Activated CD8-positive, alpha-beta T cell treated with anti-CD3 and anti-CD28 coated beads, Interleukin-2, amount 10 ng/mL, durations not matched to agents 7 days and 5 days (primary cell): ENCODE measurements at regions of chr12 and their contacts with region 1.

Region 1: DNA sequence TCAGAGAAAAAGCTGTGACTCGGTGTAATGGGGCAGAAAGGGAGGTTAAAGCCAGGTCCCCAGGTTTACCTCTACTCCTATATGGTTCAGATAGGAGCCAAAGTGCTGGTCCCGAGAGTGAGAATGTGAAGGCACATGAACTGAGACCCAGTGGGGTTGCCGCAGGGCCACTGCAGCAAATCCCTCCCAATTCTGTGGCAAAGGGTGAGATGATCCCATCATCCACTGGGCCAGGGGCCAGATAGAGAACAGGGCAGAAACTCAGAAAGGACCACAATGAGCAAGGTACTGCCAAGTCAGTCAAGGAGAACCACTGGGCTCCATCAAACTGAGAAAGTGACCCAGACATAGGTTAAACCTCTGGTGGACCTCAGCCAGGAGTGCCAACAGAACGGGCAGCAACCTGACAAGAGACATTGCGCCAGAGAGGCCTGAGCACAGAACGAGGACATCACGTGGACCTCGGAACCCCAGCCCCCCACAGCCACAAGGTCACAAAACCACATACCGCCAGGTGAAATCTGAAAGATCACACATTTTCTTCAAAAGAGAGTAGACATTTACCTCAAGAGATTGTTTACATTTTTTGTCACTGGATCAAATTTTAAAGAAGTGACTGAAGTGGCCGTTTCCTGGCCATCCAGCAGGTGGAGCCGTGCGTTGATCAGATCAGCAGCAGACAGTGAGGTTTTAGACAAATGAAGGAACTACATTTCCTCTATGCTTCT is 20.5 kb upstream of the ITPR2 start:
- DNase-seq: peak; percentile 83
- ATAC-seq: peak; percentile 96
- H3K4me3 Mint-ChIP-seq: no peak overlapping the region
- H3K27ac Mint-ChIP-seq: no peak overlapping the region
- H3K4me1 Mint-ChIP-seq: no peaks in the 10 kb centered on the region
- H3K27me3 Mint-ChIP-seq: peaks cover 9% of the 10 kb centered on the region

Region 2: GRCh38 chr12:26863502-26863901 is 10.0 kb after region 1 on chr12:
- CTCF ChIA-PET with region 1: interaction called, 15 read pairs
- POLR2A ChIA-PET with region 1: no interaction called
- DNase-seq: no peak
- ATAC-seq: no peak
- H3K4me3 Mint-ChIP-seq: no peak overlapping the region
- H3K27ac Mint-ChIP-seq: no peak overlapping the region
- H3K4me1 Mint-ChIP-seq: peaks cover 12% of the 10 kb centered on the region
- H3K27me3 Mint-ChIP-seq: peaks cover 3% of the 10 kb centered on the region

Region 3: DNA sequence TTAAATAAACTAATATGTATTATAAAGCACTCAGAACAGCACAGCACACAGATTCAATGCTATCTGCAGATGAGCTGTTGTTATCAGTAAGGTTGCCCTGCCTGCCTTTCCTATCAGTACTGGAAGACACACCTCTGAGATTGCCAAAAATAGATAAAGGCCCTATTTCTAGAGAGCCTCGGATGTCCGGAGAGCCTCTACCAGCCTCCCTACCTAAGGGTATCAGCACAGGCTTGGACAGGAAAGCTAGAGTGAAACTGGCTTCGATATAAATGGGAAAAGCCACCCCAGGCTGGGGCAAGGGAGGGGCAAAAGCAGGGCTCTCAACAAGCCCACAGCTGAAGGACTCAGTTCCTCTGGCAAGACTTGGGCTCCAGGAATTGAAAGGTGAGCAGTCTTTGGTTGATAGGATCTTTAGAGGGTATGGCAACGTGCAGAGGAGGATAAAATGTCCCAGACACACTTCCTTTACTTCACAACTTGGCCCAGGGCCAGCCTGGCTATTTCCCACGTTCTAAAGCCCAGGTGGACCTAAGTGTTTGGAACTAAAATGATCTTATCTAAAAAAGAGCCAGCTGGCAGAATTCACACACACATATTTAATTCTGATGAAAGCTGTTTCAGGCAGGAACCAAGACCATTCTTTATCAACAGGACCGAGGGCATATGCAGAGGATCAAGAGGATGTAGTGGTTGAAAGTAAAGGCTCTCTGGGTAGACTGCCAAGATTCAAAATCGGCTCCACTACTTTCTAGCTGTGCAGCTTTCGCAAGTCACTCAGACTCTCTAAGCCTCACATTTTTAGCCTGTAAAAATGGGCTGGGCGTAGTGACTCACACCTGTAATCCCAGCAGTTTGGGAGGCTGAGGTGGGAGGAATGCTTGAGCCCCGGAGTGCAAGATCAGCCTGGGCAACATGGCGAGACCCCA is 17.3 kb after region 1 on chr12:
- CTCF ChIA-PET with region 1: interaction called, 15 read pairs
- POLR2A ChIA-PET with region 1: no interaction called
- DNase-seq: no peak
- ATAC-seq: no peak
- H3K4me3 Mint-ChIP-seq: no peak overlapping the region
- H3K27ac Mint-ChIP-seq: no peak overlapping the region
- H3K4me1 Mint-ChIP-seq: peaks cover 28% of the 10 kb centered on the region
- H3K27me3 Mint-ChIP-seq: no peaks in the 10 kb centered on the region